Ascending aorta (tissue), 2 donors: ENCODE measurements at regions of chr2 and their contacts with region 1.

Region 1: DNA sequence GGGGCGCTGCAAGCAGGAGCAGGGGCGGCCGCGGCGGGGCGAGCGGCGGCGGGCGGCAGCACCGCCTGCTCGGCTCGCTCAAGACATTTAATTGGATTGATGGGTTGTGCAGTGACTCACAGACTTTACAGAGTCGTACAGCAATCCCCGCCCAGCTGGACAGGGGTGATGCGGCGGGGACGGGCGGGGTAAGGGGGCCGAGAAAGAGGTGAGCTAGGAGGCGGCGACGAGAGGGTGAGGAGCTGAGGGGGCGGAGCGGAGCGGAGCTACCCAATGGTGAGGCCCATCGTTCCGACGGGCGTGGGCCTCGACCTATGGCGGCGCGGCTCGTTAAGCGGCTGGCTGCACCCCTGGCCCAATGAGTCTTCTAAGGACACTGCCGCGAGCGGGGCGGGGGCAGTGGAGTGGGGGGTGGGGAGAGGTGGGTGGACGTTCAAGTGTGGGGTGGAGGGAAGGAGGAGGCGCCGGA is 97.1 kb upstream of the SERTAD2 start:
- DNase-seq: peak; percentile 99 to 100
- H3K4me3 ChIP-seq: peak overlapping the region; percentile 87 to 90
- H3K27ac ChIP-seq: peak overlapping the region; percentile 96 to 98
- H3K4me1 ChIP-seq: peaks cover 0 to 18% of the 10 kb centered on the region in 2 donors
- H3K27me3 ChIP-seq: no peaks in the 10 kb centered on the region
- CTCF ChIP-seq: no peak

Region 2: GRCh38 chr2:64523666-64524603 is 226.9 kb before region 1 on chr2 and contains the start of gene AFTPH:
- intact Hi-C with region 1: loop called (anchors 5 kb)
- DNase-seq: peak; percentile 98 to 99
- H3K4me3 ChIP-seq: peak within 1 kb of the TSS; percentile 64 to 99
- H3K27ac ChIP-seq: peak within 1 kb of the TSS; percentile 93 to 98
- H3K4me1 ChIP-seq: peaks cover 0 to 2% of the 10 kb centered on the region in 2 donors
- H3K27me3 ChIP-seq: no peaks in the 10 kb centered on the region
- CTCF ChIP-seq: no peak
- total RNA-seq, gene AFTPH: 58.0 TPM

Region 3: DNA sequence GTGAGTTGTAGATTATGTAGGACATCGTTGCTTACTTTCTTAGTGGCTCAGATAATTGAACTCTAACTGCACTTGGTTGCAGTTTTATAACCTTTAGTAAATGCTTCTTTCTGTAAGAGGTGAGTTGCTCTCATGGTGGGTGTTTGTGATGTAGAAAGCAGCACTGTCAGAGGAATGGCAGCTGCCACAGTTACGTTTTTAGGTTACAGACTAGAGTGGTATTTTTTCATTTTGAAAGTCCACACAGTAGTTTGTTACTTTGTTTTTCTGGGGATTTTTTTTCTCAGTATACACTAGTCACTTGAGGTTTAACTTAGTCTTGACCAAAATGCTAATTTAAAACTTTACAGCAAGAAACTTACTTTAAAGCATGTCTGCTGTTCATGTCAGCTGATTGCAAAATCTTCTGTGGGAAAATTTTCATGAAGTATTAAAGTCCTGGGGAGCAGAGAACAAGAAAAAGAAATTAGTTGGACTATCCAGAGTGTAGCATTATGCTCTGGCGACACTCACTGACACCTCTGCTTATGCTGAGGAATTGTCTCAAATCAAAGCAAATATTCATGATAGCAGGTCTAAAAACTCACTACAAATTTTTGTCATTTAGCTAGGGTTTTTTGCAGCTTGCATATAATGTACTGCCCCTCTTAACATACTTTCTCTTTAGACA is 212.0 kb before region 1 on chr2:
- intact Hi-C with region 1: no loop called
- DNase-seq: no peak
- H3K4me3 ChIP-seq: no peak overlapping the region
- H3K27ac ChIP-seq: no peak overlapping the region
- H3K4me1 ChIP-seq: peaks cover 0 to 2% of the 10 kb centered on the region in 2 donors
- H3K27me3 ChIP-seq: no peaks in the 10 kb centered on the region
- CTCF ChIP-seq: no peak

Region 4: DNA sequence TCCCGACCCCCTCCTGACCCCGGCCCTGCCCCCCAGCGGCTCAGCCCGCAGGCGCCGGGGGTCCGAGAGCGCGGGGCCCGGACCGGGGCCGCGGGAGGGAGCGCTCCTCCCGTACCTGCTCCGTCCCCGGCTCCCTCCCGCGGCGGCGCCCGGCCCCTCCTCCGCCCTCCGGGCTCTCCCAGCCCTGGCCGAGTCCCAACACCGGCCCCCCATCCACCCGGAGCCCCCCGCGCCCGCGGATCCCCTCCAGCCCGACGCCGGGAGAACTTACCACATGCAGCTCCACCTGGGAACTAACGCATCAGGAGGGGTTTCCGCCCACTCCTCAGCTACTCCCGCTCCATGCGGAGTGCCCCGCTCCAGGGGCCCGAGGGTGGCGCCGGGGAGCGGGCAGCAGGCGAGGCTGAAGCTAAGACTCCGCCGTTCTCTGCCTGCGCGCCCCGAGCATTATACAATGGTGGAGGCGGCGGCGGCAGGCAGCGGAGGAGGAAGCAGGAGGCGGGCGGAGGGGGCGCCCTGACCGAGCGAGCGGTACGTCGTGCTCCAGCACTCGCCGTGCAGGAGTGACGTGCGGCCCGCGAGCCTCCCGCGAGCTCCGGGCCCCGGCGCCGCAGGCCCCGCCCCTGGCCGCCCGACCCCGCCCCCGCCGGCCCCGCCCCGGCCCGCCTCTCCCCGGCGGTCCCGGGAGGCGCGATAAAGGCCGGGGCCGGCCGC is 97.3 kb before region 1 on chr2 and contains the start of gene SERTAD2:
- intact Hi-C with region 1: loop called (anchors 1 kb)
- DNase-seq: peak; percentile 49 to 94
- H3K4me3 ChIP-seq: peak within 1 kb of the TSS; percentile 95 to 98
- H3K27ac ChIP-seq: peak within 1 kb of the TSS; percentile 99
- H3K4me1 ChIP-seq: peaks cover 0 to 21% of the 10 kb centered on the region in 2 donors
- H3K27me3 ChIP-seq: no peaks in the 10 kb centered on the region
- CTCF ChIP-seq: no peak
- total RNA-seq, gene SERTAD2: 8.7 TPM

Region 5: DNA sequence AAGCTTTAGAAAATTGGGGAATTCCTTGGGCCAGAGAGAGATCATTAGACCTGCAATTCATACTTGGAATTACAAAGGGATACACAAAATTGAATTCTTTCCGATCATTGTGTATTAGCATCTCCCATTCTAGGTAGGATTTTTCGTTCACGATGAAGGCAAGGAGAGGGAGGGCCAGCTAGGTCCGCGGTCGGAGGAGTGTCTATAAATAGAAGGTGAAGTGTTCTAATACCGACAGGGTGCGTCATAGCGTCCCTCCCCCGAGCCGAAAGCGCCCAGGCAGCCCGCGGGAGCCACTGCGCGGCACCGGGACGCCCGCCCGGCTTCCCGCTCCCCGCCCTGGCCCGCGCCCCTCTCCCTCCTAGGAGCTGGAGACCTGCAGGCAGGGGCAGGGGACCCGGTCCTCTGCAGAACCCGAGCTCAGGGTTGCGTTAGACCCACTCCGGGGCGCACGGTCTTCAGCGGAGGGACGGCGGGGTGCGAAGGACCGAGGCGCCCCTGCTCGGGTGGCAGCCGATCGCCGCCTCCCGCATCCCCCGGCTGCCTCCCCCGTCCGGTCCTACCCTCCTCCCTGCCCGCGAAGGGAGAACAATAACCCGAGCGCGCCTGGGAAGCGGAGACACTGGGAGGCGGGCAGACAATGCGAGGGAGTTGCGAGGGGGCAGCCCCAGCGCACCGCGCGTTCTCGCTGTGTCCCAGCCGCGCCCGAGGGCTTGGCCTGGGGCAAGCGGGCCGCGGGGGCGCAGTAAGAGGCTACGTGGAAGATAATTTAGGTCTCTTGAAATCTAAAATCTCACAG is 17.0 kb after region 1 on chr2:
- intact Hi-C with region 1: loop called (anchors 1 kb)
- DNase-seq: peak; percentile 63 to 95
- H3K4me3 ChIP-seq: peak overlapping the region; percentile 72 to 79
- H3K27ac ChIP-seq: peak overlapping the region; percentile 97
- H3K4me1 ChIP-seq: peaks cover 0 to 2% of the 10 kb centered on the region in 2 donors
- H3K27me3 ChIP-seq: no peaks in the 10 kb centered on the region
- CTCF ChIP-seq: peak in 1 of 3 experiments; percentile 6

Region 6: GRCh38 chr2:64988420-64989125 is 237.7 kb after region 1 on chr2:
- intact Hi-C with region 1: loop called (anchors 1 kb)
- DNase-seq: peak in 1 of 2 donors; percentile 80
- H3K4me3 ChIP-seq: peak overlapping the region; percentile 99
- H3K27ac ChIP-seq: peak overlapping the region; percentile 97 to 99
- H3K4me1 ChIP-seq: peaks cover 0 to 27% of the 10 kb centered on the region in 2 donors
- H3K27me3 ChIP-seq: no peaks in the 10 kb centered on the region
- CTCF ChIP-seq: peak; percentile 53 to 55 (median 54)